HCT116 (cell line): ENCODE measurements at regions of chr9 and their contacts with region 1.

Region 1: DNA sequence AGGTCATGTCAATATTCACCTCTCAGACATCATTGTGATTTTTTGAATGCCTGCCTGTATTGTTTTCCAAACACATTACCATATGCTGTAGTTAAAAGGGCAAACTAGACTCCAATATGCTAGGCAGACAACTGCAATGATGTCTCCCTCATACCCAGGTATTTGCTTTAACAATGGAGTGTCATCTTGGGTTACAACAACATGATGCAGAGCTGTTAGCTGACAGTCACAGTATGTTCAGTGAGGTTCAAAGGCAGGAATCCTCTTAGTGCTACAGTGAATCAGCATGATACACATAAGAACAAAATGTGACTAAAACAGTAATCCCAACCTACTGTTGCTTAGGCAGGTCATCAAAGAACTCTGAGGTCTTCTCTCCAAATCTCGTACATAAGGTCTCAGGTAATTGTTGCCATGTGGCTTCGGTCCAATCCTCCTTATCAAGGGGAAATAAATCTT is 24.0 kb downstream of the OR1J1 start:
- DNase-seq: no peak
- ATAC-seq: no peak; the same call in 1 of the 2 replicates
- H3K4me3 ChIP-seq: no peak overlapping the region
- H3K27ac ChIP-seq: no peak overlapping the region
- H3K4me1 ChIP-seq: peaks cover 0 to 7% of the 10 kb centered on the region in 2 experiments; a peak in 1 of 4 replicates
- H3K27me3 ChIP-seq: no peaks in the 10 kb centered on the region
- CTCF ChIP-seq: no peak
- POLR2A ChIP-seq: no peak
- RAD21 ChIP-seq: no peak

Region 2: GRCh38 chr9:122092611-122093506 is 360.8 kb before region 1 on chr9 and contains the start of gene TTLL11:
- CTCF ChIA-PET with region 1: no interaction called
- POLR2A ChIA-PET with region 1: no interaction called
- RAD21 ChIA-PET with region 1: no interaction called
- intact Hi-C with region 1: loop called (anchors 1 kb)
- DNase-seq: peak; percentile 82
- ATAC-seq: peak; percentile 87
- H3K4me3 ChIP-seq: peak within 1 kb of the TSS; percentile 69 to 85
- H3K27ac ChIP-seq: peak within 1 kb of the TSS; percentile 23; the same call in 1 of the 2 replicates
- H3K4me1 ChIP-seq: peaks cover 9 to 15% of the 10 kb centered on the region in 2 experiments
- H3K27me3 ChIP-seq: no peaks in the 10 kb centered on the region
- CTCF ChIP-seq: no peak
- POLR2A ChIP-seq: peak; percentile 38
- RAD21 ChIP-seq: no peak
- total RNA-seq, gene TTLL11: 2.2 TPM

Region 3: GRCh38 chr9:122125158-122125508 is 328.6 kb before region 1 on chr9:
- CTCF ChIA-PET with region 1: interaction called, 10 read pairs
- POLR2A ChIA-PET with region 1: no interaction called
- RAD21 ChIA-PET with region 1: interaction called in 1 of 2 experiments, 3 read pairs
- intact Hi-C with region 1: loop called (anchors 1 kb)
- DNase-seq: peak; percentile 56
- ATAC-seq: peak; percentile 88
- H3K4me3 ChIP-seq: no peak overlapping the region
- H3K27ac ChIP-seq: no peak overlapping the region
- H3K4me1 ChIP-seq: peaks cover 0 to 12% of the 10 kb centered on the region in 2 experiments; a peak in 1 of 4 replicates
- H3K27me3 ChIP-seq: no peaks in the 10 kb centered on the region
- CTCF ChIP-seq: peak; percentile 92 to 97 (median 97)
- POLR2A ChIP-seq: no peak
- RAD21 ChIP-seq: peak; percentile 100

Region 4: GRCh38 chr9:122228568-122229484 is 224.9 kb before region 1 on chr9 and contains the start of gene LHX6:
- CTCF ChIA-PET with region 1: no interaction called
- POLR2A ChIA-PET with region 1: no interaction called
- RAD21 ChIA-PET with region 1: no interaction called
- intact Hi-C with region 1: no loop called
- DNase-seq: no peak
- ATAC-seq: peak; percentile 69
- H3K4me3 ChIP-seq: peak within 1 kb of the TSS; percentile 33 to 58
- H3K27ac ChIP-seq: no peak within 1 kb of the TSS; the same call in 1 of the 2 replicates
- H3K4me1 ChIP-seq: peaks cover 0 to 6% of the 10 kb centered on the region in 2 experiments; a peak in 1 of 4 replicates
- H3K27me3 ChIP-seq: peaks cover 13% of the 10 kb centered on the region; the same call in 1 of the 2 replicates
- CTCF ChIP-seq: no peak
- POLR2A ChIP-seq: no peak
- RAD21 ChIP-seq: no peak
- total RNA-seq, gene LHX6: 4.1 TPM

Region 5: GRCh38 chr9:122350638-122351355 is 102.9 kb before region 1 on chr9:
- CTCF ChIA-PET with region 1: interaction called, 7 read pairs
- POLR2A ChIA-PET with region 1: no interaction called
- RAD21 ChIA-PET with region 1: no interaction called
- intact Hi-C with region 1: loop called (anchors 1 kb)
- DNase-seq: peak; percentile 27
- ATAC-seq: peak; percentile 91
- H3K4me3 ChIP-seq: no peak overlapping the region
- H3K27ac ChIP-seq: no peak overlapping the region
- H3K4me1 ChIP-seq: peaks cover 3 to 13% of the 10 kb centered on the region in 2 experiments; a peak in 3 of 4 replicates
- H3K27me3 ChIP-seq: no peaks in the 10 kb centered on the region
- CTCF ChIP-seq: peak; percentile 93 to 97 (median 93)
- POLR2A ChIP-seq: no peak
- RAD21 ChIP-seq: peak; percentile 99

Region 6: GRCh38 chr9:122379340-122379739 is 74.4 kb before region 1 on chr9:
- CTCF ChIA-PET with region 1: no interaction called
- POLR2A ChIA-PET with region 1: no interaction called
- RAD21 ChIA-PET with region 1: no interaction called
- intact Hi-C with region 1: loop called (anchors 1 kb)
- DNase-seq: no peak
- ATAC-seq: 0 out of 2 replicates have a peak, but pooled peaks have one; percentile 56
- H3K4me3 ChIP-seq: no peak overlapping the region
- H3K27ac ChIP-seq: no peak overlapping the region
- H3K4me1 ChIP-seq: peaks cover 7 to 32% of the 10 kb centered on the region in 2 experiments
- H3K27me3 ChIP-seq: no peaks in the 10 kb centered on the region
- CTCF ChIP-seq: peak; percentile 43 to 85 (median 72); a peak in 5 of 6 replicates
- POLR2A ChIP-seq: no peak
- RAD21 ChIP-seq: peak; percentile 60

Region 7: DNA sequence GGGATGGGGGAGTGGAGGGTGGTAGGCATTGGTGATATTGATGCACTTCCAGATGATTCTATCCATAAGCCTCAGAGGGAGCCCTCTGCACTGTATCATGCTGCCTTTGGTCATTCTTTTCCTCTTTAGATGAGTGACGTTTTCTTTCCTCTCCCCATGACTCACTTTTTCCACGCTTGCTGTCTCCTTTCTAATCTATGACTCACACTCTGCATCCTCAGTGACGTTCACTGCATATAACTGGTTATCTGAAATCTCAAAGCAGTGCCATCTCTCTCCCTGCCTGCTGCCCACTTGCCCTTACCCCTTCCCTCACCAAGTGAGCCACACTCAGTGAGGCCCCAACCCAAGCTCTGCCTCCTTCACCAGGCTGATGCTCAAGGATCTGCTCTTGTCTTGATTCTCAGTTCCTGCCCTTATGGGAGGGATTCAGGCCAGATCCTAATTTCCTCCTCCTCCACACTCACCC is 51.3 kb before region 1 on chr9:
- CTCF ChIA-PET with region 1: no interaction called
- POLR2A ChIA-PET with region 1: no interaction called
- RAD21 ChIA-PET with region 1: no interaction called
- intact Hi-C with region 1: no loop called
- DNase-seq: peak; percentile 96
- ATAC-seq: peak; percentile 88
- H3K4me3 ChIP-seq: no peak overlapping the region
- H3K27ac ChIP-seq: peak overlapping the region; percentile 52; the same call in 1 of the 2 replicates
- H3K4me1 ChIP-seq: peaks cover 9 to 16% of the 10 kb centered on the region in 2 experiments
- H3K27me3 ChIP-seq: no peaks in the 10 kb centered on the region
- CTCF ChIP-seq: no peak
- POLR2A ChIP-seq: no peak
- RAD21 ChIP-seq: no peak; the same call in 1 of the 2 replicates

Region 8: DNA sequence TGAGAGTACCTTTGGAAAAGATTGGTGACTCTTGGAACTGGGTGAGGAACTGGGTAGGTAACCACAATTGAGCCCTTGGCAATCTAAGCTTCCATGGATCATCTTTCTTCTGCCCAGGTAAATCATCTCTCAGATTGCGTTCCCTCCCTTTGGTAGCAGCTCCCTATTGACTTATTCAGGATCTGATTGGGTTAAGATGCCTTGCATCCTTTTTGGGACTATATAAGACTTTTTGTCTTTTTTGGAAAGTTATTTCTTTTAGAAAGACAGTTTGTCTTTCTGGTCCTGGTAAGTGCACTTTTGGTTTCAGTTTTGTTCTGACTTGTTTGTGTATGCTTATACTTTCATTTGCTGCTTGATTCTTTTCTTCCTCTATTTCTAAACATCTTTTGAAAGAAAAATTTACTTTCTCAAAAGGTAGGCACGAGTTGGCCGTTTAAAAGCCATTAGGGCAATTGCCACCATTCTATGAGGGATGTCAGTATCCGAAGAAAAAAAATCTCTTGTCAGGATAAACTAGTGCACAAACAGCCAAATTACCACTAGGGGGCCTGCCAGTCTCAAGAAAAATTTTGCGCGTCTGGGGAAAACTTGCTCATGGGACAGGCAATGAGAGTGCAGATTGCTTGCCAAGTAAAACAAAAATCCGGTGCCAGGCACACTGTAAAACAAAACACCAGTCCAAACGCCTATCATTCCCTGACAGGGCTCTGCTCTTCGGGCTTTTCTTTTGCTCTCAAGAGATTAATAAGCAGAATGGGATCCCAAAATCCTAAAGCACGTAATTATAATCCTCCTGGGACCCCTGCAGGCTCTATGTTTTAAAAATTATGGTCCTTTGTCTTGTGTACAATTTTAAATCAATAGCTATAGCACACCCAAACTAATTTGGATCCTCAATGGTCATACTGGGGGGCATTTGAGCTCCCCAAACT is 11.2 kb after region 1 on chr9:
- CTCF ChIA-PET with region 1: interaction called, 15 read pairs
- POLR2A ChIA-PET with region 1: no interaction called
- RAD21 ChIA-PET with region 1: no interaction called
- intact Hi-C with region 1: no loop called
- DNase-seq: peak; percentile 68
- ATAC-seq: peak; percentile 89
- H3K4me3 ChIP-seq: peak overlapping the region; percentile 35 to 50
- H3K27ac ChIP-seq: no peak overlapping the region
- H3K4me1 ChIP-seq: peaks cover 0 to 12% of the 10 kb centered on the region in 2 experiments; a peak in 2 of 4 replicates
- H3K27me3 ChIP-seq: peaks cover 17% of the 10 kb centered on the region
- CTCF ChIP-seq: peak; percentile 79 to 88 (median 86)
- POLR2A ChIP-seq: no peak
- RAD21 ChIP-seq: peak; percentile 93